ENCODE measurements at regions of chr22 and their contacts with region 1.

Region 1: GRCh38 chr22:45358127-45358526 is 48.4 kb downstream of the FAM118A start:
- DNase-seq: no peak
- H3K4me3 ChIP-seq: no peak overlapping the region
- H3K27ac ChIP-seq: no peak overlapping the region
- H3K4me1 ChIP-seq: no peaks in the 10 kb centered on the region
- H3K27me3 ChIP-seq: no peaks in the 10 kb centered on the region
- CTCF ChIP-seq: no peak

Region 2: DNA sequence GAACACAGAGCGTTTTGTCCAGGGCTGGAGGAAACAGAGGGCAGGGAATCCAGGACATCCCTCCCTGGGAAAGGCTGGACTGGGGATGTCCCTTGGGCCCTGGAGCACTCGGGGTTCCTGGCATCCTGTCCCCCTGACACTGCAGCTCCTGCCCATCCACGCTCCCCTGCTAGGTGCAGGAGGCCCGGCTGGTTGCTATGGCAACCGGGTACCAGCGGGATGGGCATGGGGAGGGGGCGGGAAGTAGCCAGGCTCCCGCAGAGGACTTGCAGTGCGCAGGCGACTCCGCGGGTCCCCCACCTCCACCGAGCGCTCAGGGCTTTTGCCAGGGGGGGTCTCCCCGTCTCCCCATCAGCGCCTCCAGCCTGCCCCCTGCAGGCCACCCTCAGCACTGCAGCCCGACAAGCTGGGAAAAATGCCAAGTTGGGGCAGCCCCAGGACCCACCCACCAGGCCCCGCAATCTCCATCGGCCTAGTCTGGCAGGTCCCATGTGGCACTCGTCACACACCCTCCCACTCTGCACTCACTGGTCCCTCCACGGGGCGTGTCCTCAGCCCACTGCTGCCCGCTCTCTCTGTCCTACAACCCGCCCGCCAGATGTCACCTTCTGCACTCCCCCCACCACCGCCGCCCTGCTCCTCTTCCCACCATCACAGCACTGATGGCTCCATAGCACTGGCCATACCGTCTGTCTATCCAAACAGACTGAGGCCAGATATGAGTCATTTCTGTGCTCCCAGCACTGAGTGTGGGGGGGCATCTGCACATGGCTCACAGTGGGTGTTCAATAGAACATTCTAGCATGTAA is 148.9 kb before region 1 on chr22:
- CTCF ChIA-PET with region 1: no interaction called
- dilution Hi-C with region 1: no loop called
- in situ Hi-C with region 1: no loop called
- intact Hi-C with region 1: no loop called
- DNase-seq: peak; percentile 46
- H3K4me3 ChIP-seq: no peak overlapping the region
- H3K27ac ChIP-seq: no peak overlapping the region
- H3K4me1 ChIP-seq: peaks cover 24% of the 10 kb centered on the region
- H3K27me3 ChIP-seq: no peaks in the 10 kb centered on the region
- CTCF ChIP-seq: peak; percentile 77 to 83

Region 3: DNA sequence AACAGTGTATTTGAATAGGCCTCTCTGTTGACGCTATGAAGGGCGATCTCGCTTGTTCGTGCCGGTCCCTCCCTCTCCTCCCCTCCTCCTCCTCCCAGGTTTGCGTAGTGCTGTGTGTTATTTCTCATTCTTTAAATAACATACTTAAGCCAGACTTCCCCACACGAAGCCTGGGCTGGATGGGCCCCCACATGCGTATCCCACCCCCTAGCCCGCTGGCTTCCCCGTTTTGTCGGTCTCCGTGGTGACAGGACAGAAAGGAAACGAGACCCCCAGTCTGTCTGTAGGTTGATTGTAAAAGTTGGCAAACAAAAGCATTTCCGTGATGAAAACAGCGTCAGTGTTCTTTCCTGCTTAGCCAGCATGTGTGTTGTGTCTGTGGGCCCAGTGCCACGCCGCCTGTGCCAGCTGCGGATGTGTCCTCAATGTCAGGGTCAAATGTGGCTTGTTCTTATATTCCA is 21.1 kb before region 1 on chr22:
- CTCF ChIA-PET with region 1: no interaction called
- dilution Hi-C with region 1: no loop called
- in situ Hi-C with region 1: no loop called
- intact Hi-C with region 1: no loop called
- DNase-seq: no peak
- H3K4me3 ChIP-seq: no peak overlapping the region
- H3K27ac ChIP-seq: no peak overlapping the region
- H3K4me1 ChIP-seq: peaks cover 24% of the 10 kb centered on the region
- H3K27me3 ChIP-seq: no peaks in the 10 kb centered on the region
- CTCF ChIP-seq: no peak

Region 4: GRCh38 chr22:45381348-45381747 is 23.2 kb after region 1 on chr22:
- CTCF ChIA-PET with region 1: no interaction called
- dilution Hi-C with region 1: no loop called
- in situ Hi-C with region 1: no loop called
- intact Hi-C with region 1: no loop called
- DNase-seq: no peak
- H3K4me3 ChIP-seq: no peak overlapping the region
- H3K27ac ChIP-seq: no peak overlapping the region
- H3K4me1 ChIP-seq: no peaks in the 10 kb centered on the region
- H3K27me3 ChIP-seq: no peaks in the 10 kb centered on the region
- CTCF ChIP-seq: no peak

Region 5: DNA sequence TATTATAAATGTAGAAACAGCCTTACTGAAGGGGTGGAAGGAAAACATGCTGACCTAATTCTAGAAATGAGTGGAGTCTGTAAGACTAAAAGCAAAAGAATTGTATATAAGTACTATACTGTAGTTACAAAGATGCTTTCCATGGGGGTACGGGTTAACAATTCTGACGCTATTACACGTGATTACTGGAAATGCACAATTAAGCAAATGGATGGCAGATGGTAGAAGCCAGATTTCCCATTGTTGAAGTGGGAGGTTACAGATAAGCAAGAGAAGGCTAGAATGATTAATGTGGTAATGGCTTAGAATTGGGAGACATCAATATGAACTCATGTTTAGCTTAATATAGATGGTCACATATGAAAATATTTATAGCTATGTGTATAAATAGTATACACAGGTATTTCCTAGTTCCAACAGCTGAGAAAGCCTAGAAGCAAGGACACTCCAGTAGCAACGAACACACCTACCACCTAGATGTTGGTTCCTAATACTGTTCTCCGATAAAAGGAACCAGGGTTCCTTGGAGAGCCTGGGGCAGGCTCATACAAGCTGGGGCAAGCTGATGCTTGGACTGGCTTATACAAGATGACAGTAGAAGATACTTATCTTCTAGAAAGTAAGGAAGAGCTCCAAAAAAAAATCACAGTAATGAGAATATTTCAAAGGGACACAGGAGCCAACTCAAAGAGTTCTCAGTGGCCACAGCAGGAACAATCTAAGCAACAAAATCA is 41.8 kb after region 1 on chr22:
- CTCF ChIA-PET with region 1: no interaction called
- dilution Hi-C with region 1: no loop called
- in situ Hi-C with region 1: no loop called
- intact Hi-C with region 1: loop called (anchors 5 kb)
- DNase-seq: peak; percentile 70
- H3K4me3 ChIP-seq: no peak overlapping the region
- H3K27ac ChIP-seq: no peak overlapping the region
- H3K4me1 ChIP-seq: peaks cover 8% of the 10 kb centered on the region
- H3K27me3 ChIP-seq: no peaks in the 10 kb centered on the region
- CTCF ChIP-seq: no peak

Region 6: GRCh38 chr22:45425101-45425500 is 67.0 kb after region 1 on chr22:
- CTCF ChIA-PET with region 1: no interaction called
- dilution Hi-C with region 1: loop called (anchors 5 kb)
- in situ Hi-C with region 1: no loop called
- intact Hi-C with region 1: no loop called
- DNase-seq: no peak
- H3K4me3 ChIP-seq: no peak overlapping the region
- H3K27ac ChIP-seq: no peak overlapping the region
- H3K4me1 ChIP-seq: no peaks in the 10 kb centered on the region
- H3K27me3 ChIP-seq: no peaks in the 10 kb centered on the region
- CTCF ChIP-seq: no peak